ENCODE measurements at regions of chr14 and their contacts with region 1.

Region 1: GRCh38 chr14:24806061-24806678 is 172.2 kb upstream of the GZMB start:
- DNase-seq: peak; percentile 43
- H3K4me3 Mint-ChIP-seq: no peak overlapping the region
- H3K27ac Mint-ChIP-seq: no peak overlapping the region
- H3K4me1 Mint-ChIP-seq: no peaks in the 10 kb centered on the region
- H3K27me3 Mint-ChIP-seq: peaks cover 15% of the 10 kb centered on the region

Region 2: DNA sequence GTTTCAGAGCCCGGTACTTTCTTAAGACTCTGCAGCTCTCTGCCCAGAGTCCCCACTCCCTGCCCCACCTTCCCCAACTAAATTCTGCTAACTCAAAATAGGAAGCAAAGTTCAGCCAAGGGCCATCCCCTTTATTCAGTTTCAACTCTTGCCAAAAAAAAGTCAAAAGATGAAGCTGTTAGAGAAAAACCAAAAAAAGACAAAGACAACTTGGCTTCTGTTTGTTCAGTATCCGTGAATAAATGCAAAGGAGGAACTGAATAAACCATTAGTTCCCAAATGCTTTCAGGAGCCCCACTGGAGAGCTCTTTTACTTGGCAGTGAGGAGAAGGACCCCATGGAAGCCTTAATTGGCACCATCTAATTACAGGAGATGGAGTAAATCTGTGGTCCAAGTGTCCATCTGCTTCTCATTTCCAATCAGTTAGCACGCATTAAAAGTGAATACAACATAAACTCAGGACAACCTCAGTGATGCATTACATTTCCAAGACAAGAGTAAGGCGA is 16.7 kb before region 1 on chr14:
- CTCF ChIA-PET with region 1: no interaction called
- POLR2A ChIA-PET with region 1: no interaction called
- DNase-seq: no peak
- H3K4me3 Mint-ChIP-seq: no peak overlapping the region
- H3K27ac Mint-ChIP-seq: no peak overlapping the region
- H3K4me1 Mint-ChIP-seq: no peaks in the 10 kb centered on the region
- H3K27me3 Mint-ChIP-seq: peaks cover 25% of the 10 kb centered on the region

Region 3: GRCh38 chr14:25132732-25133422 is 326.7 kb after region 1 on chr14:
- CTCF ChIA-PET with region 1: interaction called, 24 read pairs
- POLR2A ChIA-PET with region 1: no interaction called
- DNase-seq: peak; percentile 52
- H3K4me3 Mint-ChIP-seq: no peak overlapping the region
- H3K27ac Mint-ChIP-seq: no peak overlapping the region
- H3K4me1 Mint-ChIP-seq: no peaks in the 10 kb centered on the region
- H3K27me3 Mint-ChIP-seq: peaks cover 16% of the 10 kb centered on the region